ENCODE measurements at regions of chr10 and their contacts with region 1.

Region 1: GRCh38 chr10:60646966-60647796 is 131.1 kb upstream of the CDK1 start:
- DNase-seq: peak in 7 of 9 donors; percentile 16 to 61 (median 47)
- ATAC-seq: peak; percentile 67
- H3K4me3 ChIP-seq: no peak overlapping the region
- H3K4me3 Mint-ChIP-seq: no peak overlapping the region
- H3K27ac ChIP-seq: no peak overlapping the region
- H3K27ac Mint-ChIP-seq: peak overlapping the region in 2 of 9 donors; percentile 8 to 14
- H3K4me1 ChIP-seq: peaks cover 0 to 7% of the 10 kb centered on the region in 2 donors
- H3K4me1 Mint-ChIP-seq: peaks cover 19 to 70% (median 46%) of the 10 kb centered on the region in 7 donors
- H3K27me3 ChIP-seq: no peaks in the 10 kb centered on the region
- H3K27me3 Mint-ChIP-seq: no peaks in the 10 kb centered on the region

Region 2: DNA sequence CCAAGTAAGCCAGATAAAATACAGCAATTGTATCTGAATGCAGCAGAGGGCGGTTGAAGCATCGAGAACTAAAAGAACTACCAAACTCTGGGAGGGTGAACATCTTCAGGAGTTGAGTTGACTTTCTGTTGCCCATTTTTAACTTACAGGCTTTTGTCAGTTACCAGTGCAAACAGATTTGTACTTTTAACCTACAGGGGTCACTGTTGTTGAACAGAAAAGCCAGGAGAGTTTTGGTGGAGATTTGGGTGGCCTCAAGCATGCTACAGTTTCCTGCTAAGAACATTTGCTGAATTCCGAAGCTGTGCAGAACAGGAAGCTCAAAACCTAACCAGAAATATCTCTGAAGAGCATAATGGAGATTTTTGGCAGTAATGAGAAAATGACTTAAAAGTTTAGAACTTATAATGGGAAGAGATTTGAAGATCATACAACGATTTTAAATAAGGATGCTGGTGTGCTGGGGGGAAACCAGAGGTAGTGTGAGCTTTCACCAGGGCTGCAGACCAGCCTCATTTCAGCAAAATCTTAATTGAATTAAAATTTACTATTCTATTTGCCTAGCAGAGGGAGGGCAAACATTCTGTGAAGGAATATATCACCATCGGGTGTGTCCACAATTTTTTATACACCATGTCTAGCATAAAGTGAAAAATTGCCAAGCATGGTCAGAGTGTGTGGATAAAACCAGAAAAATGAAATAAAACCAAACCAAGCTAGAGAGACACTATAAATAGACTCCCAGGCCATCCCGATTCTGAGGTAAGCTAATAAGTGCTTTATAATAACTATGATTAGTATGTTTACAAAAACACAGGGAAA is 532.2 kb before region 1 on chr10:
- CTCF ChIA-PET with region 1: no interaction called
- POLR2A ChIA-PET with region 1: no interaction called
- intact Hi-C with region 1: loop called in 1 of 2 experiments (anchors 2 kb)
- DNase-seq: peak in 6 of 9 donors; percentile 1 to 58 (median 44)
- ATAC-seq: peak; percentile 54
- H3K4me3 ChIP-seq: no peak overlapping the region
- H3K4me3 Mint-ChIP-seq: no peak overlapping the region
- H3K27ac ChIP-seq: no peak overlapping the region
- H3K27ac Mint-ChIP-seq: no peak overlapping the region
- H3K4me1 ChIP-seq: no peaks in the 10 kb centered on the region
- H3K4me1 Mint-ChIP-seq: no peaks in the 10 kb centered on the region
- H3K27me3 ChIP-seq: no peaks in the 10 kb centered on the region
- H3K27me3 Mint-ChIP-seq: no peaks in the 10 kb centered on the region

Region 3: GRCh38 chr10:60444494-60445064 is 202.6 kb before region 1 on chr10:
- CTCF ChIA-PET with region 1: interaction called, 3 read pairs
- POLR2A ChIA-PET with region 1: no interaction called
- intact Hi-C with region 1: loop called (anchors 1 to 2 kb)
- DNase-seq: no peak
- ATAC-seq: no peak
- H3K4me3 ChIP-seq: no peak overlapping the region
- H3K4me3 Mint-ChIP-seq: no peak overlapping the region
- H3K27ac ChIP-seq: no peak overlapping the region
- H3K27ac Mint-ChIP-seq: no peak overlapping the region
- H3K4me1 ChIP-seq: peaks cover 0 to 11% of the 10 kb centered on the region in 2 donors
- H3K4me1 Mint-ChIP-seq: peaks cover 12 to 34% (median 20%) of the 10 kb centered on the region in 7 donors
- H3K27me3 ChIP-seq: no peaks in the 10 kb centered on the region
- H3K27me3 Mint-ChIP-seq: no peaks in the 10 kb centered on the region

Region 4: GRCh38 chr10:60541451-60541850 is 105.7 kb before region 1 on chr10:
- CTCF ChIA-PET with region 1: no interaction called
- POLR2A ChIA-PET with region 1: no interaction called
- intact Hi-C with region 1: no loop called
- DNase-seq: no peak
- ATAC-seq: no peak
- H3K4me3 ChIP-seq: no peak overlapping the region
- H3K4me3 Mint-ChIP-seq: no peak overlapping the region
- H3K27ac ChIP-seq: no peak overlapping the region
- H3K27ac Mint-ChIP-seq: peak overlapping the region in 1 of 9 donors; percentile 12
- H3K4me1 ChIP-seq: no peaks in the 10 kb centered on the region
- H3K4me1 Mint-ChIP-seq: peaks cover 0 to 23% (median 14%) of the 10 kb centered on the region in 7 donors
- H3K27me3 ChIP-seq: no peaks in the 10 kb centered on the region
- H3K27me3 Mint-ChIP-seq: no peaks in the 10 kb centered on the region

Region 5: GRCh38 chr10:60728056-60728455 is 80.9 kb after region 1 on chr10:
- CTCF ChIA-PET with region 1: interaction called, 7 read pairs
- POLR2A ChIA-PET with region 1: interaction called, 3 read pairs
- intact Hi-C with region 1: loop called (anchors 2 kb)
- DNase-seq: peak in 7 of 9 donors; percentile 51 to 85 (median 78)
- ATAC-seq: peak; percentile 73
- H3K4me3 ChIP-seq: peak overlapping the region; percentile 57
- H3K4me3 Mint-ChIP-seq: peak overlapping the region; percentile 74 to 94 (median 83)
- H3K27ac ChIP-seq: peak overlapping the region; percentile 89
- H3K27ac Mint-ChIP-seq: peak overlapping the region; percentile 84 to 98 (median 94)
- H3K4me1 ChIP-seq: peaks cover 28 to 64% of the 10 kb centered on the region in 2 donors
- H3K4me1 Mint-ChIP-seq: peaks cover 35 to 86% (median 77%) of the 10 kb centered on the region in 7 donors
- H3K27me3 ChIP-seq: no peaks in the 10 kb centered on the region
- H3K27me3 Mint-ChIP-seq: peaks cover 0 to 7% (median 0%) of the 10 kb centered on the region in 5 donors

Region 6: DNA sequence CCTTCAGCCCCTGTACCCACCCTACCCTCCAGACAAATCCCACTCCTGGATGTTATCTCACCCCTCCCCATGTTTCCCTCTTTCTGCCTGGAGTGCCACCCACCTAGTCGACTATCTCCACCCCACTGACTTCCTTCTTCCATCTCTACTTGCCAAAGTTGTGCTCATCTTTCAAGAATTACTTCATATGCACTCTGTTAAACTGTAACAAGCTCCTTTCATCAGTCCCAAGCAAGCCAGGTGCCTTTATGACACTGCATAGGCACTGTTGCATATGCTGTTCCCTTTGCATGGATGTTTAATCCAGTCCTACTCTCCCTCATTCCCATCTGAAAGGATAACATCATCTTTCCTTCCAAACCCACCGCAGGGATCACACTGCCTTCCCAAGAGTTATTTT is 122.2 kb after region 1 on chr10:
- CTCF ChIA-PET with region 1: interaction called, 4 read pairs
- POLR2A ChIA-PET with region 1: no interaction called
- intact Hi-C with region 1: loop called (anchors 1 kb)
- DNase-seq: no peak
- ATAC-seq: no peak
- H3K4me3 ChIP-seq: no peak overlapping the region
- H3K4me3 Mint-ChIP-seq: no peak overlapping the region
- H3K27ac ChIP-seq: no peak overlapping the region
- H3K27ac Mint-ChIP-seq: no peak overlapping the region
- H3K4me1 ChIP-seq: no peaks in the 10 kb centered on the region
- H3K4me1 Mint-ChIP-seq: peaks cover 0 to 20% (median 14%) of the 10 kb centered on the region in 7 donors
- H3K27me3 ChIP-seq: no peaks in the 10 kb centered on the region
- H3K27me3 Mint-ChIP-seq: peaks cover 0 to 6% (median 0%) of the 10 kb centered on the region in 5 donors